MCF 10A (cell line): ENCODE measurements at regions of chr5 and their contacts with region 1.

Region 1: GRCh38 chr5:109409844-109410388 is at the start of gene PJA2:
- DNase-seq: peak; percentile 100
- H3K4me3 Mint-ChIP-seq: peak within 1 kb of the TSS; percentile 99
- H3K27ac Mint-ChIP-seq: peak within 1 kb of the TSS; percentile 98
- H3K4me1 Mint-ChIP-seq: peaks cover 11% of the 10 kb centered on the region
- H3K27me3 Mint-ChIP-seq: no peaks in the 10 kb centered on the region
- CTCF ChIP-seq: no peak
- total RNA-seq, gene PJA2: 54.4 and 56.9 TPM in 2 replicates

Region 2: DNA sequence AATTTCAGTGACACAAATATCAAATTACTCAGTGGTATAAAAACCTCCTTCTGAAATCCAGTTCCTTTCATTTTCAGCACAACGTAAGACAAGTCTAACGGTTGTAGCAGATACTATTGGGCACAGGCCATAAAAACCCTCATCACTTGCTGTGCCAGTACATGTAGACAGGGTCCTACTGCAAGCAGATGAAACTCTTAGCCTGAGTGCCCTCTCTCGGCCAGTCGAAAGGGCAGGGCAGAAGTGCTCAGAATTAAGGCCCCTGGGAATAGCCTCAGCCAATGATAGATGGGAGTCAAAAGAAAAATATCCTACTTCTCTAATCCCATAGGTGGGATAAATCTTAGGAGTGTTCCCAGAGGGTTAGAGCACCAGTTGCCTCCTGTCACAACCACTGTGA is 830.7 kb before region 1 on chr5:
- CTCF ChIA-PET with region 1: no interaction called
- POLR2A ChIA-PET with region 1: no interaction called
- intact Hi-C with region 1: no loop called
- DNase-seq: no peak
- H3K4me3 Mint-ChIP-seq: no peak overlapping the region
- H3K27ac Mint-ChIP-seq: no peak overlapping the region
- H3K4me1 Mint-ChIP-seq: no peaks in the 10 kb centered on the region
- H3K27me3 Mint-ChIP-seq: no peaks in the 10 kb centered on the region
- CTCF ChIP-seq: no peak

Region 3: DNA sequence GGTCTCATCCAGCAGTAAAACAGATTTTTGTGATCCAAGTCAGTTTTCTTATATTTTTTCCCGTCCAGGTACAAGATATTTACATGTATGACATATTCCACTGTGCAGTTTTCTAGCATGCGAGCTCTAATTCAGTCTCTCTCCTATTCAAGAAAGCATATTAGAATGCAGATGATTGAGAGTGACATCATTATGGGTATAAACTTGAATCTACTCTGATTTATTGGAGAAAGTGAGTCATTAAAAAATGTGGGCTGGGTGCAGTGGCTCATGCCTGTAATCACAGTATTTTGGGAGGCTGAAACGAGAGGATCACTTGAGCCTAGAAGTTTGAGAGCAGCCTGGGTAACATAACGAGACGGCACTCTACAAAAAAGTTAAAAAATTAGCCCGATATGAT is 656.0 kb before region 1 on chr5:
- CTCF ChIA-PET with region 1: no interaction called
- POLR2A ChIA-PET with region 1: interaction called, 21 read pairs
- intact Hi-C with region 1: no loop called
- DNase-seq: peak; percentile 68
- H3K4me3 Mint-ChIP-seq: peak overlapping the region; percentile 70
- H3K27ac Mint-ChIP-seq: peak overlapping the region; percentile 94
- H3K4me1 Mint-ChIP-seq: peaks cover 13% of the 10 kb centered on the region
- H3K27me3 Mint-ChIP-seq: no peaks in the 10 kb centered on the region
- CTCF ChIP-seq: no peak

Region 4: DNA sequence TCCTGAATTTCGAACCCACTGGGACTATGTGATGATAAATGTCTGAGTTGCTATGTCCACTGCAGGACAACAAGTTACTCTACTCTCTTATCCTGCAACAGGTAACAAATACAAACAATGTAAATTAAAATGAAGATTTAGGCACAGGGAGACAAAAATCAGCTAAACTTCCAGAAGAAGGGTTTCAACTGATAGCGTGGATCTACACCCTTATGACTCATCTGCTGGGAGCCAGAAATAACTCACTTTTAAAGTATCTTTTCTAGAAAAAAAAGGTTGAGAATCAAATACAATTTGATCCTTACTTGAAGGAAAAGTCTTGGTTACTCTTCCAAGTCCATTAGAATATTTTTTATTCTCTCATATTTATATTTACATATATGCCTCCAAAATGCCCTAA is 21.5 kb before region 1 on chr5:
- CTCF ChIA-PET with region 1: interaction called, 3 read pairs
- POLR2A ChIA-PET with region 1: interaction called, 23 read pairs
- intact Hi-C with region 1: no loop called
- DNase-seq: no peak
- H3K4me3 Mint-ChIP-seq: no peak overlapping the region
- H3K27ac Mint-ChIP-seq: peak overlapping the region; percentile 58
- H3K4me1 Mint-ChIP-seq: peaks cover 30% of the 10 kb centered on the region
- H3K27me3 Mint-ChIP-seq: no peaks in the 10 kb centered on the region
- CTCF ChIP-seq: no peak

Region 5: DNA sequence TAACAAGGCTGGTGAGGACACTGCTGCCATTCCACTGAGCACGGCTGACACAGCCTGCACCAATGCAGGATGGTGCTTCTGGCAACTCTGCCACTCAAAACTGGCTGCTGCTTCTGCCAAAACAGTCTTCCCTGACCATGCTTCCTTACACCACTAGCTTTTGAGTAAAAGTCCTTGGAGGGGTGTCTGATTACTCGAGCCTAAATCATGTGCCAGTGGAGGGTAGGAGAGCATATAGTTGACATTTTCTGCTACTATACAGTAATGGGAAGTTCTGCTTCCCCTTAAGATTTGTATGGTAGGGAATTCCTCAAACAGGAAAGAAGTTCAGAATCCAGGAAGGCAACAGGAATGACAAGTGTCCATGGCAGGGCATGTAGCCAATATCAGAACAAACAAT is 12.0 kb after region 1 on chr5:
- CTCF ChIA-PET with region 1: no interaction called
- POLR2A ChIA-PET with region 1: interaction called, 10 read pairs
- intact Hi-C with region 1: loop called (anchors 1 kb)
- DNase-seq: no peak
- H3K4me3 Mint-ChIP-seq: no peak overlapping the region
- H3K27ac Mint-ChIP-seq: no peak overlapping the region
- H3K4me1 Mint-ChIP-seq: peaks cover 5% of the 10 kb centered on the region
- H3K27me3 Mint-ChIP-seq: no peaks in the 10 kb centered on the region
- CTCF ChIP-seq: no peak

Region 6: GRCh38 chr5:109455598-109456096 is 45.7 kb after region 1 on chr5:
- CTCF ChIA-PET with region 1: interaction called, 3 read pairs
- POLR2A ChIA-PET with region 1: interaction called, 80 read pairs
- intact Hi-C with region 1: loop called (anchors 1 kb)
- DNase-seq: peak; percentile 99
- H3K4me3 Mint-ChIP-seq: peak overlapping the region; percentile 8
- H3K27ac Mint-ChIP-seq: peak overlapping the region; percentile 72
- H3K4me1 Mint-ChIP-seq: peaks cover 7% of the 10 kb centered on the region
- H3K27me3 Mint-ChIP-seq: no peaks in the 10 kb centered on the region
- CTCF ChIP-seq: no peak